K562 (cell line): ENCODE measurements at regions of chr12 and their contacts with region 1.

Region 1: DNA sequence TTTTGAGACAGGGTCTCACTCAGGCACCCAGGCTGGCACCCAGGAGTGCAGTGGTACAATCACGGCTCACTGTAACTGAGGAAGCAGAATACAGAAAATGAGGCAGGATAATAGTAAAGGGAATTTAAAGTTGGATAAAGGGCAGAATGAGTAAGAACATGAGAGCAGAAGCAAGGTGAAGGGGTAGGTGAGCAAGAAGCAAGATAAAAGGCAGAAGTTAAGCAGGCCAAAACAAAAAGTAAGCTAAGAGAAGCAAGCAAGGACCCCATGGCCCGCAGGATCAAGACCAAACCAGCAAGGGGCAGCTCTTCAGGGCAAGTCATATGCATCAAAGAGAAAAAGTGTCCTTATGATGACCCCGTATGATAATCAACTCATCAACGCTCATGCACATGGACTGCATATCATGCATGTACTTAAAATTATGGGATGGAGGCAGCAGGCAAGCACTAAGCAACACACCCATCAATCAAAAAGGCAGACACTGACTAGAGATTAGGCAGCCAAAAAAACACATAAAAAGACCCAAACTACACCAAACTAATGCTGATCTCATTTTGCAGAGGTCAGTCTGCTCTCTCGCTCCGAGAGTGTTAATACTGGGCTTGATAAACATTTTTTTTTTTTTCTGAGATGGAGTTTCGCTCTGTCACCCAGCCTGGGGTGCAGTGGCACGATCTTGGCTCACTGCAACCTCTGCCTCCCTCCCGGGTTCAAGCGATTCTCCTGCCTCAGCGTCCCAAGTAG is 11.6 kb downstream of the TIMELESS start:
- DNase-seq: peak; percentile 63 to 86 (median 74)
- ATAC-seq: peak; percentile 91
- H3K4me3 ChIP-seq: peak overlapping the region; percentile 8; the same call in 1 of the 2 replicates
- H3K27ac ChIP-seq: peak overlapping the region; percentile 85
- H3K4me1 ChIP-seq: peaks cover 18 to 24% of the 10 kb centered on the region in 2 experiments
- H3K27me3 ChIP-seq: no peaks in the 10 kb centered on the region
- CTCF ChIP-seq: peak in 2 of 3 experiments; percentile 15; a peak in 1 of 6 replicates
- EP300 ChIP-seq: peak; percentile 79
- POLR2A ChIP-seq: peak; percentile 57; the same call in 1 of the 2 replicates
- RAD21 ChIP-seq: peak in 1 of 2 experiments; percentile 22; a peak in 1 of 4 replicates

Region 2: DNA sequence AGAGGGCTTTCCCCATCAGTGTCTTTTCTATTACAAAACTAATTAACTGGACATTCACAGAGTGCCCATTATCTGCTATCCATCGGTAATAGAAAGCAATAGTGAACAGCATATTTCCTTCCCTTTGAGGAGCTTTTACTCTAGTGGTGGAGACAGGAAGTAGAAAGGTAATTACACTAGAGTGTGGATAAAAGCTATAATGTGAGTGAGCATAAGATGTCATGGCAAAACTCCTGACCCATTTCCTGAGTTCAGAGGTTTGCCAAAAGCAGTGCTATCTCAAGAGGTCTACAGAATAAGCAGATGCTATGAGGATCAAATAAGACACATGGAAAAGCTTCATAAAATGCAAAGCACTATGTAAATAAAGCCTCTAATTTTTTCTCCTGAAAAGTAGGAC is 12.4 kb before region 1 on chr12:
- CTCF ChIA-PET with region 1: no interaction called
- POLR2A ChIA-PET with region 1: interaction called, 12 read pairs
- in situ Hi-C with region 1: no loop called
- intact Hi-C with region 1: no loop called
- DNase-seq: no peak
- ATAC-seq: no peak
- H3K4me3 ChIP-seq: no peak overlapping the region
- H3K27ac ChIP-seq: no peak overlapping the region
- H3K4me1 ChIP-seq: no peaks in the 10 kb centered on the region
- H3K27me3 ChIP-seq: no peaks in the 10 kb centered on the region
- CTCF ChIP-seq: no peak
- EP300 ChIP-seq: no peak
- POLR2A ChIP-seq: no peak
- RAD21 ChIP-seq: no peak

Region 3: DNA sequence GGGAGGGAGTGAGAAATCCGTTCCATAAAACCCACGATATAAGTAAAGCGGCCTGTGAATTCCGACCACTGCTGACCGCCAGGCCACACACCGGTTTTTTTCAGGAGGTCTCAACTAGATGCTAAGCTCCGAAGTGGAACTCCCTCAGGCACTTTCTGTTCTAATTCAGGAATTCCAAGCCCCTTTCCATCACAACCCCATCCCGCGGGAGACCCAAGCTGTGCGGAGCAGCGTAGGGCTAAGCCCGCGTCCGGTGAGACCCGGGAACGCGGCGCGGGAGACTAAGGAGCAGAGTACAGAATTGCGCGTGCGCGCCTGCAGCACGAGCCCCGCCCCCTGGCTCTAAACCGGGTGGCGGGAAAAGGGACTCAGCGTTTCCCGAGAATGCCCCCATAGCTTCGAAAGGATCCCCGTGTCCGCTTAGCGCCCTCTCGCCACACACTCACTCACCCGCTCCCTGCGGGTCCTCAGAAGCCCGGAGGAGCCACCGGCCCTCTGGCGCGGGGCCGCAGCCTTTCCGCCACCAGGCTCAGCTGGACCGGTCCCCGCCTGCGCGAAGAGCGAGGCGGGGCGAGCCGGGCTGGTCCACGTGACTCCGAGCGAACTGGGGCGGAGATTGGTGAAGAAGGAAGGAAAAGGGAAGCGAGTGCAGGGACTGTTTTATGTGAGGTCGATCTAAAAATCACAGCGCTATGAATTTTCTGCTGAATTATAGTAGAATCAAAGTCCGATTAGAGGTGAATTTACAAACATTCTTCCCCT is 11.4 kb after region 1 on chr12 and contains the start of gene TIMELESS:
- CTCF ChIA-PET with region 1: no interaction called
- POLR2A ChIA-PET with region 1: interaction called, 23 read pairs
- in situ Hi-C with region 1: no loop called
- intact Hi-C with region 1: no loop called
- DNase-seq: peak; percentile 94 to 95 (median 95)
- ATAC-seq: peak; percentile 96
- H3K4me3 ChIP-seq: peak within 1 kb of the TSS; percentile 52
- H3K27ac ChIP-seq: peak within 1 kb of the TSS; percentile 91
- H3K4me1 ChIP-seq: peaks cover 11 to 19% of the 10 kb centered on the region in 2 experiments
- H3K27me3 ChIP-seq: no peaks in the 10 kb centered on the region
- CTCF ChIP-seq: 0 out of 6 replicates have a peak, but pooled peaks of 1 of the 3 experiments have one; percentile 15
- EP300 ChIP-seq: no peak; the same call in 1 of the 2 replicates
- POLR2A ChIP-seq: peak; percentile 95
- RAD21 ChIP-seq: no peak
- polyA plus RNA-seq, gene TIMELESS: 11.9 to 17.8 TPM

Region 4: GRCh38 chr12:56476972-56477432 is 39.4 kb after region 1 on chr12:
- CTCF ChIA-PET with region 1: no interaction called
- POLR2A ChIA-PET with region 1: no interaction called
- in situ Hi-C with region 1: no loop called
- intact Hi-C with region 1: no loop called
- DNase-seq: no peak
- ATAC-seq: peak; percentile 16; the same call in 2 of the 3 replicates
- H3K4me3 ChIP-seq: no peak overlapping the region
- H3K27ac ChIP-seq: no peak overlapping the region
- H3K4me1 ChIP-seq: peaks cover 0 to 4% of the 10 kb centered on the region in 2 experiments; a peak in 2 of 5 replicates
- H3K27me3 ChIP-seq: no peaks in the 10 kb centered on the region
- CTCF ChIP-seq: no peak
- EP300 ChIP-seq: no peak
- POLR2A ChIP-seq: no peak
- RAD21 ChIP-seq: no peak

Region 5: GRCh38 chr12:56546680-56547079 is 109.1 kb after region 1 on chr12:
- CTCF ChIA-PET with region 1: no interaction called
- POLR2A ChIA-PET with region 1: no interaction called
- in situ Hi-C with region 1: no loop called
- intact Hi-C with region 1: no loop called
- DNase-seq: no peak
- ATAC-seq: no peak
- H3K4me3 ChIP-seq: no peak overlapping the region
- H3K27ac ChIP-seq: no peak overlapping the region
- H3K4me1 ChIP-seq: no peaks in the 10 kb centered on the region
- H3K27me3 ChIP-seq: peaks cover 13 to 15% of the 10 kb centered on the region in 2 experiments; a peak in 4 of 5 replicates
- CTCF ChIP-seq: no peak
- EP300 ChIP-seq: no peak
- POLR2A ChIP-seq: no peak
- RAD21 ChIP-seq: no peak